ENCODE measurements at regions of chr14 and their contacts with region 1.

Region 1: DNA sequence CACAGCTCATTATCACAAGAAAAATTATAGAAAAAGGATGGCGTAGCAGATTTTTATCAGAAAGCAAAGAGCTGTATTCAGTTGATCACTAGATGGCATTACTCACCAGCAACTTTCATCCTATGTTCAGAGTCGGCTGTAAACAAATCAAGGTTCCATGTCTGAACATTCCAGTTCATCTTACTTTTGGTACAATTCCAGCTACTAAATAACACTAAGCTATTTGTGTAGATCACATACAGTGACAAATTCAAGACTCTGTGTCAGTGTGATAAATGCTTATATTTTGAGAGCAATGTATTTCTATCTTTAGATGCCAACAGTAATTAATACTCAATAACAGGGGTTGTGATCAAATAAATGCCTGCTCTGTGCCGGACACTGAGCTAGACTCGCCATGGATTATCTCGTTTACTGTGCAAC is 30.1 kb downstream of the NRDE2 start:
- DNase-seq: no peak
- ATAC-seq: peak; percentile 23 to 70 (median 42)
- H3K4me3 ChIP-seq: no peak overlapping the region
- H3K27ac ChIP-seq: peak overlapping the region in 11 of 12 donors; percentile 11 to 73 (median 42)
- H3K4me1 ChIP-seq: peaks cover 5 to 43% (median 16%) of the 10 kb centered on the region in 12 donors
- H3K27me3 ChIP-seq: no peaks in the 10 kb centered on the region
- CTCF ChIP-seq: peak; percentile 30 to 74 (median 60)
- POLR2A ChIP-seq: no peak

Region 2: GRCh38 chr14:90253826-90254225 is 47.9 kb before region 1 on chr14:
- intact Hi-C with region 1: no loop called
- DNase-seq: no peak
- ATAC-seq: no peak
- H3K4me3 ChIP-seq: no peak overlapping the region
- H3K27ac ChIP-seq: no peak overlapping the region
- H3K4me1 ChIP-seq: peaks cover 4 to 23% (median 15%) of the 10 kb centered on the region in 12 donors
- H3K27me3 ChIP-seq: peaks cover 0 to 4% (median 0%) of the 10 kb centered on the region in 9 donors
- CTCF ChIP-seq: no peak
- POLR2A ChIP-seq: no peak

Region 3: DNA sequence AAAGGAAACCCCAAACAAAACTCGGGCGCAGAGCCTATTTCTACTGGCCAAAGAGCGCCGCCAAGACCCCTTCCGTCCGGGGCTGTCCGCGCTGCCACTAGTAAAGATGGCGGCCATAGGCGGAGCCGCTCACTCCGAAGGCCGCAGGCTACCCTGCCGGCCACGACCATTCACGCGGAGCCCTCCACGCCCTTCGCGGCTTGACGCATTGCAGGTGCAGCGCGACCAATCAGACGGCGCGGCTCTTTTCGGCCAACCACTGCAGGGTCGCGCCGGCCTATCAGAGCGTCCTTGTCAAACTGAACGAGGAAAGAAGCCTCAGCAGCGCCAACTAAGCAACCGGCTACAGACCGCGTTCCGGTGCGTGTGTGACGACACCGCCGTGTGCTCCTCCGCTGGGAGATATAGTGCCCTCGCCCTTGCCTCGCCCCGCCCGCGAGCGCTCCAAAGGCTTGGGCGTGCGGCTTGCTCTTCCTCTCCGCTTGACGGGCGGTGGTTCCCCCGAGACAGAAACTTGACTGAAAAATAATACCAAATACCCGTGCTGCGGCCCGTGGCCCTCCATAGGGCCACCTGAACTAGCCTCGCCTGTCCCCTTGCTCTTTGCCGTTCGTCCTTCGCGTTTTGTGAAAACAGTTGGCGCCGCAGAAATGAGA is 81.5 kb after region 1 on chr14:
- intact Hi-C with region 1: loop called in 1 of 10 experiments (anchors 5 kb)
- DNase-seq: peak; percentile 100
- ATAC-seq: peak; percentile 93 to 98 (median 96)
- H3K4me3 ChIP-seq: peak overlapping the region; percentile 47 to 80 (median 66)
- H3K27ac ChIP-seq: peak overlapping the region; percentile 98 to 100 (median 99)
- H3K4me1 ChIP-seq: peaks cover 4 to 44% (median 27%) of the 10 kb centered on the region in 12 donors
- H3K27me3 ChIP-seq: no peaks in the 10 kb centered on the region
- CTCF ChIP-seq: peak in 7 of 12 donors; percentile 10 to 31 (median 25)
- POLR2A ChIP-seq: peak; percentile 31 to 91

Region 4: DNA sequence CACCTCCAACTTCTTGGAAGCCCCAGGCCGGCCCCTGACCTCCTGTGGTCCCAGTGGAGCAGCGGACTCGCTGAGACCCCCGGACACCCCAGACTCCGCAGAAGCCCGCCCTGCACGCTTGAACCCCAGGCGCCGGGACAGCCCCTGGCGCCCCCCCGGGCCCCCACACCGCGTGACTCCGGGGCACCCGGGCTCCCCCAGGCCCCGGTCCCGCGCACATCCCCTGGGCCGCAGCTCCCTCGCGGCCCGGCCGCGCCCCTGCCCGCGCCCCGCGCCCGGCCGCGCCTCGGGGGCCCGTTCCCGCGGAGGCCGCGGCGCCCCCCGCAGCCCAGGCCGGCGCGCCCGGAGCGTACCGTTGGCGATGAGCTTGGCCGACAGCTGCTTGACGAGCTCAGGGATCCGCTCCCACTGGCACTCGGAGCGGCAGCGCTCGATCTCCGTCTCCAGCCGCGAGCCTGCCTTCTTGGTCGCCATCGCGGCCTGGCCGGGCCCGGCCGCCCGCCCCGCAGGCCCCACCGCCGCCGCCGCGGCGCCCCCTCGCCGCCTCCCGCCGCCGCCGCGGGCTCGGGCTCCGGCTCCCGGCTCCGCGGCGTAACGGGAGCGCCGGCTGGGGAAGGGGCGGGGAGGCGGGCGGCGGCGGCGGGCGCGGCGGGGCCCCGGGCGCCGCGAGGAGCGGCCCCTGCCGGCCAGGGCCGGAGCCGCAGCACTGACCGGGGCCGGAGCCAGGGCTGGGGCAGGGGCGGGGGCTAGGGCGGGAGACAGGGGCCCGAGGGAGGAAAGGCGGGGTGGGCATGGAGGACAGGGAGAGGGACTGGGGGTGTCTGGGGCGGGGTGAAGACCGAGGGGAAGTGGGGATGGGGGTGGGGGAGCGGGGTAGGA is 514.4 kb after region 1 on chr14 and contains the start of gene TTC7B:
- intact Hi-C with region 1: loop called in 1 of 10 experiments (anchors 5 kb)
- DNase-seq: peak; percentile 50 to 73 (median 57)
- ATAC-seq: peak; percentile 57 to 86 (median 76)
- H3K4me3 ChIP-seq: peak within 1 kb of the TSS; percentile 56 to 97 (median 79)
- H3K27ac ChIP-seq: peak within 1 kb of the TSS in 4 of 12 donors; percentile 59 to 68 (median 60)
- H3K4me1 ChIP-seq: peaks cover 0 to 34% (median 14%) of the 10 kb centered on the region in 12 donors
- H3K27me3 ChIP-seq: no peaks in the 10 kb centered on the region
- CTCF ChIP-seq: peak in 8 of 12 donors; percentile 10 to 45 (median 28)
- POLR2A ChIP-seq: no peak
- total RNA-seq, gene TTC7B: 54.5 to 76.1 (median 67.9) TPM

Region 5: GRCh38 chr14:90894241-90894640 is 592.6 kb after region 1 on chr14:
- intact Hi-C with region 1: loop called in 4 of 10 experiments (anchors 5 to 10 kb)
- DNase-seq: no peak
- ATAC-seq: no peak
- H3K4me3 ChIP-seq: no peak overlapping the region
- H3K27ac ChIP-seq: no peak overlapping the region
- H3K4me1 ChIP-seq: peaks cover 0 to 7% (median 0%) of the 10 kb centered on the region in 12 donors
- H3K27me3 ChIP-seq: no peaks in the 10 kb centered on the region
- CTCF ChIP-seq: no peak
- POLR2A ChIP-seq: no peak